Posterior vena cava (tissue), 2 donors: ENCODE measurements at regions of chr18 and their contacts with region 1.

Region 1: DNA sequence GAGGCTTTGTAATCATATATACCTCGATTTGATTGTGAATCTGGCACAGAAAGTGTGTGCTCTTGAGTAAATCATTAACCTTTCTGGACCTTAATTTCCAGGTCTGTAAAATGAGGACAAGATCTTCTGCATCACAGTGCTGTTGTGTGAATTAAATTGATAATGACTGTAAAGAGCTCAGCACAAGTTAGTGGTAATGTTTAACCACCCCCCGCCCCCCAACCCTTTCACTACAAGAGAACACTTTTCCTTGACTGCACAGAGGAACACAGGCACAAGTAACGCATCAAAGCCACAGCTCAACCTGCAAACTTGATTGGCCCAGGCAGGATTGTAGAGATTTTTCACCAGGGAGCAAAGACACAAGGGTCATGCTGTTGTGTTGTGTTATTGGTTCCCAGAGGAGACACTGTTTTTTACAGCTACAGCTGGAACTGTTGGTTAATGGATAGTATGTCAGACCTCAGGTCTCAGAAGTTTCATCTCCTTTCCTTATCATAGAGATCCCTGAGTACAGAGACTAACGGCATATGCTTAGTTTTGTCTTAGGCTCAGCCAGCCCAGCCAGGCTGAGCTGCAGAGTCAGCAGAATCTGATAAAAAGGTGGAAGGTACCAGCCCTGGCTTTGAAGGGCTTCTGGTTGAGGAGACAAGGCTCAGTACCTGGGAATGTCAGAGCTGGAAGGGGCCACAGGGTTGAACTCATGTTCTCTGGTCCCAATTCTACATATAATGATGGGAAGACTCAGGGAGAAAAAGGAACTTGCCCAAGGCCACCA is 10.6 kb downstream of the SETBP1 start:
- DNase-seq: no peak

Region 2: GRCh38 chr18:44704137-44704789 is 12.9 kb after region 1 on chr18:
- intact Hi-C with region 1: loop called in 1 of 2 experiments (anchors 1 kb)
- DNase-seq: no peak